Thyroid gland (tissue), 4 donors: ENCODE measurements at regions of chr7 and their contacts with region 1.

Region 1: GRCh38 chr7:107147464-107148393 is 21.1 kb upstream of the HBP1 start:
- DNase-seq: peak; percentile 10 to 14
- H3K4me3 ChIP-seq: no peak overlapping the region
- H3K27ac ChIP-seq: no peak overlapping the region
- H3K4me1 ChIP-seq: no peaks in the 10 kb centered on the region
- H3K27me3 ChIP-seq: no peaks in the 10 kb centered on the region
- CTCF ChIP-seq: peak in 5 of 6 experiments; percentile 20 to 66 (median 56)
- POLR2A ChIP-seq: no peak

Region 2: GRCh38 chr7:106793015-106793975 is 354.4 kb before region 1 on chr7:
- intact Hi-C with region 1: loop called (anchors 5 kb)
- DNase-seq: peak in 1 of 2 donors; percentile 14
- H3K4me3 ChIP-seq: no peak overlapping the region
- H3K27ac ChIP-seq: no peak overlapping the region
- H3K4me1 ChIP-seq: peaks cover 3% of the 10 kb centered on the region in 2 donors
- H3K27me3 ChIP-seq: no peaks in the 10 kb centered on the region
- CTCF ChIP-seq: peak; percentile 36 to 74 (median 66)
- POLR2A ChIP-seq: no peak

Region 3: GRCh38 chr7:106947244-106947728 is 200.4 kb before region 1 on chr7:
- intact Hi-C with region 1: loop called (anchors 10 kb)
- DNase-seq: peak; percentile 45 to 57
- H3K4me3 ChIP-seq: no peak overlapping the region
- H3K27ac ChIP-seq: no peak overlapping the region
- H3K4me1 ChIP-seq: no peaks in the 10 kb centered on the region
- H3K27me3 ChIP-seq: no peaks in the 10 kb centered on the region
- CTCF ChIP-seq: peak in 5 of 6 experiments; percentile 13 to 56 (median 54)
- POLR2A ChIP-seq: no peak

Region 4: DNA sequence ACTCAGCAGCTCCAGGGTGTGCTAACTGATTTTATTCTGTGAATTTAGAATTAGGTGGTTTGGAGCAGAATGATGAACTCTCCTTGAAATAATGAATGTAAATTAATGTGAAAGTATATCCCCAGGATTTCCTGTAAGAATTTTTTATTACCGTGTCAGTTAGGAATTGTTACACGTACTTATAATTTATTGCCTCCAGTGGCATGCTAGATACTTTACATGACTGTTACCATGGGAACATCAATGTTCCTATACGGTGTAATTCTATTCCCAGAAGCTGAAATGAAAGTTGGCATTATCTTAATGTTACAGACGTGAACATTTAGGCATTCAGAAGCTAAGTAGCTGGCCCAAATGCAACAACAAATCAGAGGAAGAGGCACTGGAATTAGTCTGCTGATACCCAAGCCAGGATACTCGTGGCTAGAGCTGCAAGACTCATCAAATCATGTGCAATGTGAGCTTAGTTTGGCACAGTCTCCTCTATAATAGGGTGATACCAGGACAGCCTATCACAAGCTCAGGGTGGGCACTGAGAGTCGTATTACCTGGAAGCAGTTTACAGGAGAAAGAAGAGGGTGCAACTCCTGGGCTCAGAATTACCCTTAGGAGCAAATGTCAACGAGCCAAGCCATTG is 133.2 kb before region 1 on chr7:
- intact Hi-C with region 1: no loop called
- DNase-seq: no peak
- H3K4me3 ChIP-seq: no peak overlapping the region
- H3K27ac ChIP-seq: no peak overlapping the region
- H3K4me1 ChIP-seq: no peaks in the 10 kb centered on the region
- H3K27me3 ChIP-seq: no peaks in the 10 kb centered on the region
- CTCF ChIP-seq: no peak
- POLR2A ChIP-seq: no peak